Heart right ventricle (tissue), 16 donors: ENCODE measurements at regions of chr1 and their contacts with region 1.

Region 1: GRCh38 chr1:76140227-76140626 is 65.7 kb downstream of the ST6GALNAC3 start:
- DNase-seq: no peak
- ATAC-seq: no peak
- H3K4me3 ChIP-seq: no peak overlapping the region
- H3K27ac ChIP-seq: peak overlapping the region in 9 of 10 donors; percentile 60 to 79 (median 75)
- H3K4me1 ChIP-seq: peaks cover 0 to 62% (median 24%) of the 10 kb centered on the region in 9 donors
- H3K27me3 ChIP-seq: no peaks in the 10 kb centered on the region
- CTCF ChIP-seq: peak in 1 of 9 donors; percentile 17

Region 2: DNA sequence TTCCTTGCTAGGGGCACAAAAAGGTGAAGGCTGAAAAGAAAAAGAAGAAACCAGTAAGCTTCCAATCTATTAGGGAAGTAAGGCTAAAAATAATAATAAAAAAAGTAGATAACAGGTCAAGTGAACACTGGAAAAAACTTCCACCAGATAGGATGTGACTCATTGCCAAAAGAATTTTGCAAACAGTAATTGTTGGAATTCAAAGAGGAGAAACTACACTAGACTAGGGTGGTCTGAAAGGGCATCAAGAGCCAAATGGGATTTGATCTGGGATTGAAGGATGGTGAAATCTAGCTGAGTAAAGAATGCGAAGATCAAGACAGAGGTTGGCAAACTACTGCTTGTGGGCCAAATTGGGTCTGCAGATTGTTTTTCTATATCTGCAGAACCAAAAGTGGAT is 71.7 kb before region 1 on chr1:
- intact Hi-C with region 1: loop called in 1 of 10 experiments (anchors 5 kb)
- DNase-seq: no peak
- ATAC-seq: peak in 4 of 8 donors; percentile 47 to 67 (median 62)
- H3K4me3 ChIP-seq: no peak overlapping the region
- H3K27ac ChIP-seq: peak overlapping the region in 7 of 10 donors; percentile 9 to 49 (median 18)
- H3K4me1 ChIP-seq: peaks cover 0 to 21% (median 9%) of the 10 kb centered on the region in 9 donors
- H3K27me3 ChIP-seq: no peaks in the 10 kb centered on the region
- CTCF ChIP-seq: no peak

Region 3: DNA sequence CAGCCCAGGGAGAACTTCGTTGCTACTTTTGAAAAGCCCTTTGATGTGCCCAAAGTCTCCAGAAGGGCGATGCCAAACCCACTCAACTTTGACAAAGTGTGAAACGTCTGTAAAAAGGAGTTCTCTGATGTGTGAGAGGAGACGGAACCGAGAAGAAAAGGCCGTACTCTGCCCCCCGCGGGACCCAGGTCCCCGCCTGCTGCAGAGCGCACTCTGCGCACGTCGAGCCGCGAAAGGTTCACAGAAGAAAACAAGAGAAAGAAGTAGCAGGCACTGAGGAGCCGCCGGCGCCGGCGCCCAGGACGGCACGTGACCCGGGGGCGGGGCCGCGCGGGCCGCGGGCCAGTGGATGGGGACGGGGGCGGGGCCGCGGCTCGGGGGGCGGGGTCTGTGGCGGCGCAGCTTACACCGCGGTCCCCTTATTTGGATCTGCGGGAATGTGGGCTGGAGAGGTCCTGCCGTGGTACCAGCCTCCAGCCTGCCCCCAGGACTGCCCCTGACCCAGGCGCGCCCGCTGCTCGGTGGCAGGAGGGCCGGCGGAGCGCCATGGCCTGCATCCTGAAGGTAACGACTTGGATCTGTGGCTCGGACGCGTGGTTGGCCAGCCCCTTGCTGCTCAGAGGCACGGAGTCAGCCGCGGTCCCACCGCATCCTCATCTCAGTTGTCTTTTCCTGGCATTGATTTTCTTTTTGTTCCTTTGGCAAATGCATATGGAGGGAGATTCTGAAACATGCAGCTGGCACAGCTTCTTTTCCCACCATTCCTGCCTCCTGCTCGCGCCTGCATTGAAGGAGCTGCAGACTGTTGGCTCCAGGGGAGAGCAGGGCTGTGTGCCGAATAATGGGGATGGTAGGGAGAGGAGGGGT is 65.7 kb before region 1 on chr1 and contains the start of gene ST6GALNAC3:
- intact Hi-C with region 1: loop called in 4 of 10 experiments (anchors 1 to 5 kb)
- DNase-seq: peak; percentile 65 to 78
- ATAC-seq: peak; percentile 91 to 98 (median 96)
- H3K4me3 ChIP-seq: peak within 1 kb of the TSS; percentile 56 to 77 (median 68)
- H3K27ac ChIP-seq: peak within 1 kb of the TSS; percentile 45 to 88 (median 82)
- H3K4me1 ChIP-seq: peaks cover 0 to 38% (median 11%) of the 10 kb centered on the region in 9 donors
- H3K27me3 ChIP-seq: no peaks in the 10 kb centered on the region
- CTCF ChIP-seq: no peak
- total RNA-seq, gene ST6GALNAC3: 2.8 to 10.3 (median 5.0) TPM

Region 4: GRCh38 chr1:76083189-76083588 is 57.0 kb before region 1 on chr1:
- intact Hi-C with region 1: loop called in 2 of 10 experiments (anchors 5 kb)
- DNase-seq: no peak
- ATAC-seq: peak in 3 of 8 donors; percentile 24 to 43 (median 39)
- H3K4me3 ChIP-seq: peak overlapping the region in 1 of 10 donors; percentile 12
- H3K27ac ChIP-seq: no peak overlapping the region
- H3K4me1 ChIP-seq: peaks cover 0 to 14% (median 0%) of the 10 kb centered on the region in 9 donors
- H3K27me3 ChIP-seq: no peaks in the 10 kb centered on the region
- CTCF ChIP-seq: no peak